ACHN (cell line): ENCODE measurements at regions of chr12 and their contacts with region 1.

Region 1: DNA sequence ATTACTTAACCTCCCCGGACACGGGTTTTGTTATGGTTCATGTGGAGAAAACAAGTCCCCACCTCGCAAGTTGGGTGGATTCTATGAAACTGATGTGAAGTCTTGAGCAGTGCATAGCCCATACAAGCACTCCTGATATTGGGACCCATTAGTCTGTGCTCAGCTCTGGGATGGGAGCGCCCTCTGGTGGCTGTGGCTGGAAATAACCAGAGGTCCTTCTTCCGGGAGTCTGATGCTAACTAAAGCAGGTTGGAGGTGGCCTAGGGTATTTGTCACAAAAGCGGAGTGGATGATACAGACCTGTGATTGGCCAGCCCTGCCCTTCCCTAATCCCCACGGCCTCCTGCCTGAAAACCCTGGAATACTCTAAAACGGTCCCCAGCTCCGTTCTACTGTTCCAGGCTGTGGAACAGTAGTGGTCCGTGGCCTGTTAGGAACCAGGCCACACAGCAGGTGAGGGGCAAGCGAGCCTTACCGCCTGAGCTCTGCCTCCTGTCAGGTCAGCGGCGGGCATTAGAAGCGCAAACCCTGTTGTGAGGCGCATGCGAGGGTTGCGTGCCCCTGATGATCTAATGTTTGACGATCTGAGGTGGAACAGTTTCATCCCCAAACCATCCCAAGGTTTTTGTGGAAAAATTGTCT is 6.4 kb downstream of the SLC48A1 start:
- DNase-seq: peak; percentile 92

Region 2: GRCh38 chr12:47715393-47715876 is 64.0 kb before region 1 on chr12:
- in situ Hi-C with region 1: loop called (anchors 10 kb)
- DNase-seq: peak; percentile 77